ENCODE measurements at regions of chr11 and their contacts with region 1.

Region 1: DNA sequence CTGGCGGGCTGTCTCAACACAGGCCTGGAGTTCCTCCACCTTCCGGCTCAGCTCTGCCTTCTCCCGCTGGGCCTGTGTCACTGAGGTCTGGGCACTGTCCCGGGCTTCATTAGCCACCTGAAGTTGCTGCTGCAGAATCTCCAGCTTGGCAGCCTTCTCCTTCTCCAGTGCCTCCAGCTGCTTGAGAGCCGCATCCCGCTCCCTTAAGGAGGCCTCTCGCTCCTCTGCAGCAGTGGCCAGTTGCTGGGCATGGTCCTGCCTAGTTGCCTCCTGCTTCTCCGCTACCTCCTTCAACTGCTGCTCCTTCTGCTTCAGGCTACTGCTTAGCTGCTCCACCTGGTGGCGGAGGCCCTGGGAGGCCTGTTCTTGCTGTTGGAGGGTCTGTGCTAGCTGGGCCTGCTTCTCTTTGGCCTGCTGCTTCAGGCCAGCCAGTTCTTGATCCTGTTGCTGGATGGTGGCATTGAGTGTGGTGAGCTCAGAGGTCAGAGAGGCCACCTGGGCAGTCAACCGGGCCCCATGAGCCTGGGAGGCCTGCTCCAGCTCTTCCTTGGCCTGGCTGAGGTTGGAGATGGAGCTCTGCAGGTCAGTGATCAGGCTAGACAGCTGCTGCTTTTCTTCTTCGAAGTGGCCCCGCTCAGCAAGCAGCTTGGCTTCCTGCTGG is 16.9 kb downstream of the IL18BP start:
- DNase-seq: peak in 2 of 10 donors; percentile 40 to 45
- H3K4me3 ChIP-seq: no peak overlapping the region
- H3K27ac ChIP-seq: peak overlapping the region in 51 of 59 donors; percentile 13 to 92 (median 84)
- H3K27me3 ChIP-seq: no peaks in the 10 kb centered on the region
- CTCF ChIP-seq: peak in 52 of 56 donors; percentile 13 to 58 (median 42)

Region 2: DNA sequence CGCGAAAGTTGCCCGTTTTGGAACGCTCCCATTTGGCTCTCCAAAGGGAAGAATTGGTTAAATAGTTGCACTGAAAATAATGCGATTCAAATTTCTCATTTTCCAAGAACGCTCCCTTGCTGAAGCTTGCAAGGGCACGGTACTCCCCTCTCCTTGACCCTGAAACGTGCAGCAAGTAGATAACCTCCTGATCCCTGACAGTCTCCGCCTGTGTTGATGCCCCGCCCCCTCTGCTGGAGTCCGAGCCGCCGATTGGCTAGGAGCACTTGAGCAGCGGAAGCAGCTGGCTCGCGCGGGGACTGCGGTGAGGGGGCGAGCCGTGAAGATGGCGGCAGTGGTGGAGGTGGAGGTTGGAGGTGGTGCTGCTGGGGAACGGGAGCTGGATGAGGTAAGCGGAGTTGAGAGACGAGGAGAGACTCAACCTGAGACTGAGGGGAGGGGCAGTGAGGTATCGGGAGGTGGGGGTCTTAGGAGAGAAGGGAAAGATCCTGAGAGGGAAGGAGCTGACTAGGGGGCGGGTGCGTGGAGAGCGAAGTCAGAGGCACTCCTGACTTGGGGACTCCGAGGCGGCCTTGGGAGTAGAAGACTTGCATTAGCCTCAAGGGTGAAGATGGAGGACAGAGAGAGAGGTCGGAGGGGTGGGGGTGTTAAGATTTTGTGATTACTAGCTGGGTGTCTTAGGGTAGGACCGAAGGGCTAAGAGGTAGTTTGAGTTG is 86.7 kb before region 1 on chr11 and contains the start of gene RNF121:
- intact Hi-C with region 1: loop called in 1 of 2 experiments (anchors 10 kb)
- DNase-seq: peak; percentile 96 to 99 (median 98)
- H3K4me3 ChIP-seq: peak within 1 kb of the TSS; percentile 64 to 99 (median 88)
- H3K27ac ChIP-seq: peak within 1 kb of the TSS in 58 of 59 donors; percentile 27 to 96 (median 87)
- H3K27me3 ChIP-seq: no peaks in the 10 kb centered on the region
- CTCF ChIP-seq: peak in 10 of 56 donors; percentile 3 to 58 (median 12)
- total RNA-seq, gene RNF121: 25.6 to 48.0 (median 34.6) TPM

Region 3: GRCh38 chr11:72308226-72309073 is 292.8 kb after region 1 on chr11:
- intact Hi-C with region 1: loop called in 1 of 2 experiments (anchors 10 kb)
- DNase-seq: peak in 6 of 10 donors; percentile 30 to 65 (median 36)
- H3K4me3 ChIP-seq: no peak overlapping the region
- H3K27ac ChIP-seq: no peak overlapping the region
- H3K27me3 ChIP-seq: no peaks in the 10 kb centered on the region
- CTCF ChIP-seq: no peak